ENCODE measurements at regions of chr14 and their contacts with region 1.

Region 1: DNA sequence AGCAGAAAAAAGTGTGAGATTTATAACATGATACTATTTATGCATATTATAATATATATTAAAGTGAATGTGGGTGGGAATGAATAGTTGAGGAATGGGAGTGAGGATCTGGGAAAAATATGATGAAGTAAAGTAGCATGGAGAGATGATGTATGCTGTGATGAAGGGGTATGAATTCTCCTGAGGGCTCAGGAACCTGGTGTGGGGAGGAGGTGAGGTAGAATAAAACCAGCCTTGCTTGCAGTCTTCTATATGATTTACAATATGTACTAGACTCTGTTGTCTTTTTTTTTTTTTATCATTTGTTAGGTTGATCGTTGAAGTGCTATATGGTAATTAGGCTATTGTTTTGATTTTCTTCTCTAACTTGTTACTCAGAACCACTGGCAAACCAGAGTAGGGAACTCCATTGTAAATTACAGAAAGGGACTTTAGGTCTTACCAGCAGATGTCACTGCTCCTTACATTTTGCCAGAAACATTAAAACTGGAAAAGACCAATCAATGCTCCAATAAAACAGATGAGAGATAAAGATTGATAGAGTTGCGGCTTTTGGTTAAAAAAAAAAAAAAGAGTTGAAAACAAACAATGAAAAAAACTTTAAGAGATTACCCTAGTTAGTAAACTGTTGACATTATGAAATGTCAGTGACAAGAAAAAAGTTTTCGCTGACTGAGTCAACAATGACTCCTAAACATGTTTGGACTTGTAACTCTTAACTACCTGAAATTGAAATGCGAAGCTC is 39.9 kb downstream of the ATL1 start:
- DNase-seq: no peak
- H3K4me3 ChIP-seq: no peak overlapping the region
- H3K27ac ChIP-seq: no peak overlapping the region
- H3K27me3 ChIP-seq: no peaks in the 10 kb centered on the region
- CTCF ChIP-seq: peak; percentile 66

Region 2: GRCh38 chr14:50542941-50543418 is 56.9 kb before region 1 on chr14:
- CTCF ChIA-PET with region 1: interaction called, 10 read pairs
- POLR2A ChIA-PET with region 1: no interaction called
- DNase-seq: no peak
- H3K4me3 ChIP-seq: no peak overlapping the region
- H3K27ac ChIP-seq: no peak overlapping the region
- H3K27me3 ChIP-seq: peaks cover 2% of the 10 kb centered on the region
- CTCF ChIP-seq: peak; percentile 60

Region 3: DNA sequence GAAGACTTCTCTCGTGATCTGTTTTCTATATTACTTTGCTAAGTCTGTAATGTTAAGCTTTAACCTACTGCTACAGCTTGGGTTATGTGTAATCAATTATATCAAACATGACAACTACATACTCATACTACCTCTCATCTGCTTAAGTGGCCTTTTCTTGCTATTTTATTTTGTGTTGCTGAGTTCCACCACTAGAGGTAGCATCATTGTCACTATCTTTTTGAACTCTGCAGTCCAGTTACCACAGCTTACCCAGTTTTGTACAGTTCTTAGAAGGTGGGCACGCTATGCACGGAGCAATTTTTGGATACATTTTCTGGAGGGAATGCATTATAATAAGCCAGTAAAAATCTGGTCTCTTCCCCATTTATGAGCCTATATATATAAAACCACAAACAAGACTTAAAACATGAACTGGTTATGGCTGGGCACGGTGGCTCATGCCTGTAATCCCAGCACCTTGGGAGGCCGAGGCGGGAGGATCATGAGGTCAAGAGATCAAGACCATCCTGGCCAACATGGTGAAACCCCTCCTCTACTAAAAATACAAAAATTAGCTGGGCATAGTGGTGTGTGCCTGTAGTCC is 19.8 kb after region 1 on chr14:
- CTCF ChIA-PET with region 1: interaction called, 10 read pairs
- POLR2A ChIA-PET with region 1: no interaction called
- DNase-seq: no peak
- H3K4me3 ChIP-seq: no peak overlapping the region
- H3K27ac ChIP-seq: no peak overlapping the region
- H3K27me3 ChIP-seq: no peaks in the 10 kb centered on the region
- CTCF ChIP-seq: peak; percentile 71

Region 4: GRCh38 chr14:50762001-50762930 is 162.4 kb after region 1 on chr14:
- CTCF ChIA-PET with region 1: interaction called, 16 read pairs
- POLR2A ChIA-PET with region 1: no interaction called
- DNase-seq: peak; percentile 38
- H3K4me3 ChIP-seq: no peak overlapping the region
- H3K27ac ChIP-seq: no peak overlapping the region
- H3K27me3 ChIP-seq: no peaks in the 10 kb centered on the region
- CTCF ChIP-seq: no peak

Region 5: GRCh38 chr14:51534625-51535024 is 934.8 kb after region 1 on chr14:
- CTCF ChIA-PET with region 1: no interaction called
- POLR2A ChIA-PET with region 1: no interaction called
- DNase-seq: no peak
- H3K4me3 ChIP-seq: no peak overlapping the region
- H3K27ac ChIP-seq: no peak overlapping the region
- H3K27me3 ChIP-seq: no peaks in the 10 kb centered on the region
- CTCF ChIP-seq: no peak

Region 6: DNA sequence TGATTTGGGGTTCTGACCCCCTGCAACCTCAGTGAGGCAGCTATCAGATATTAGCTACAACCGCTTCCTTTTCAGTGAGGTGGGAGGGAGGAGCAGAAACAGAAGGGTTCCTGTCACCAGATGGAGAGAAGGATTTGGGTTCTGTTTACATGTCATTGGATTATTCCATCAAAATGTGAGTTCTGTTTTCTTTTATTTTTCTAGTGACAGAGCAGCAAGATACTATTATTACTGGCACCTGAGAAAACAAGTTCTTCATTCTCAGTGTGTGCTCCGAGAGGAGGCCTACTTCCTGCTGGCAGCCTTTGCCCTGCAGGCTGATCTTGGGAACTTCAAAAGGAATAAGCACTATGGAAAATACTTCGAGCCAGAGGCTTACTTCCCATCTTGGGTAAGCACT is 1104.7 kb after region 1 on chr14:
- CTCF ChIA-PET with region 1: no interaction called
- POLR2A ChIA-PET with region 1: no interaction called
- DNase-seq: no peak
- H3K4me3 ChIP-seq: no peak overlapping the region
- H3K27ac ChIP-seq: no peak overlapping the region
- H3K27me3 ChIP-seq: no peaks in the 10 kb centered on the region
- CTCF ChIP-seq: no peak

Measured in AG04450 (cell line).